ENCODE measurements at regions of chr7 and their contacts with region 1.

Region 1: GRCh38 chr7:123682690-123683089 is 27.0 kb downstream of the LMOD2 start:
- DNase-seq: peak; percentile 78
- ATAC-seq: peak; percentile 72
- H3K4me3 ChIP-seq: no peak overlapping the region
- H3K27ac ChIP-seq: no peak overlapping the region
- H3K4me1 ChIP-seq: no peaks in the 10 kb centered on the region
- H3K27me3 ChIP-seq: no peaks in the 10 kb centered on the region
- CTCF ChIP-seq: peak; percentile 65

Region 2: DNA sequence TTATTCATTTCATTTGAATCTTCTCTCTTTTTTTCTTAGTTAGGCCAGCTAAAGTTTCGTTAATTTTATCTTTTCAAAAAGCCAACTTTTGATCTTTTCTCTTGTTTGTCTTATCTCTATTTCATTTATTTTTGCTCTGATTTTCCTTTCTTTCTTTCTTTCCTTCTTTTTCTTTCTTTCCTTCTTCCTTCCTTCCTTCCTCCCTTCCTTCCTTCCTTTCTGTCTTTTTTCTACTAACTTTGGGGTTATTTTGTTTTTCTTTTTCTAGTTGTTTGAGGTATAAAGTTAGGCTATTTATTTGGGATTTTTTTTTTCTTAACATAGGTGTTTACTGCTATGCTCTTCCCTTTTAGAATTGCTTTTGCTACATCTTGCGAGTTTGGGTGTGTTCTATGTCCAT is 94.3 kb before region 1 on chr7:
- CTCF ChIA-PET with region 1: no interaction called
- POLR2A ChIA-PET with region 1: no interaction called
- intact Hi-C with region 1: loop called (anchors 5 kb)
- DNase-seq: no peak
- ATAC-seq: no peak
- H3K4me3 ChIP-seq: no peak overlapping the region
- H3K27ac ChIP-seq: no peak overlapping the region
- H3K4me1 ChIP-seq: no peaks in the 10 kb centered on the region
- H3K27me3 ChIP-seq: 0 out of 2 replicates have a peak, but pooled peaks cover 5% of the 10 kb centered on the region
- CTCF ChIP-seq: no peak

Region 3: GRCh38 chr7:123865517-123866117 is 182.9 kb after region 1 on chr7:
- CTCF ChIA-PET with region 1: no interaction called
- POLR2A ChIA-PET with region 1: no interaction called
- intact Hi-C with region 1: loop called (anchors 2 kb)
- DNase-seq: peak; percentile 78
- ATAC-seq: peak; percentile 95
- H3K4me3 ChIP-seq: no peak overlapping the region
- H3K27ac ChIP-seq: no peak overlapping the region
- H3K4me1 ChIP-seq: peaks cover 7% of the 10 kb centered on the region
- H3K27me3 ChIP-seq: no peaks in the 10 kb centered on the region
- CTCF ChIP-seq: peak; percentile 82